CD14-positive monocyte (primary cell): ENCODE measurements at regions of chr2 and their contacts with region 1.

Region 1: GRCh38 chr2:241355983-241356870 is at the start of gene FARP2:
- DNase-seq: peak; percentile 96 to 98 (median 98)
- H3K4me3 ChIP-seq: peak within 1 kb of the TSS; percentile 48 to 82 (median 77)
- H3K4me3 Mint-ChIP-seq: peak within 1 kb of the TSS; percentile 80 to 89
- H3K27ac ChIP-seq: peak within 1 kb of the TSS; percentile 44 to 73
- H3K27ac Mint-ChIP-seq: peak within 1 kb of the TSS; percentile 87 to 95 (median 94)
- H3K4me1 ChIP-seq: peaks cover 29 to 33% of the 10 kb centered on the region in 2 donors
- H3K4me1 Mint-ChIP-seq: peaks cover 35% of the 10 kb centered on the region
- H3K27me3 ChIP-seq: no peaks in the 10 kb centered on the region
- H3K27me3 Mint-ChIP-seq: peaks cover 0 to 4% (median 0%) of the 10 kb centered on the region in 3 donors
- CTCF ChIP-seq: no peak
- polyA plus RNA-seq, gene FARP2: 6.7 to 8.5 (median 7.3) TPM

Region 2: DNA sequence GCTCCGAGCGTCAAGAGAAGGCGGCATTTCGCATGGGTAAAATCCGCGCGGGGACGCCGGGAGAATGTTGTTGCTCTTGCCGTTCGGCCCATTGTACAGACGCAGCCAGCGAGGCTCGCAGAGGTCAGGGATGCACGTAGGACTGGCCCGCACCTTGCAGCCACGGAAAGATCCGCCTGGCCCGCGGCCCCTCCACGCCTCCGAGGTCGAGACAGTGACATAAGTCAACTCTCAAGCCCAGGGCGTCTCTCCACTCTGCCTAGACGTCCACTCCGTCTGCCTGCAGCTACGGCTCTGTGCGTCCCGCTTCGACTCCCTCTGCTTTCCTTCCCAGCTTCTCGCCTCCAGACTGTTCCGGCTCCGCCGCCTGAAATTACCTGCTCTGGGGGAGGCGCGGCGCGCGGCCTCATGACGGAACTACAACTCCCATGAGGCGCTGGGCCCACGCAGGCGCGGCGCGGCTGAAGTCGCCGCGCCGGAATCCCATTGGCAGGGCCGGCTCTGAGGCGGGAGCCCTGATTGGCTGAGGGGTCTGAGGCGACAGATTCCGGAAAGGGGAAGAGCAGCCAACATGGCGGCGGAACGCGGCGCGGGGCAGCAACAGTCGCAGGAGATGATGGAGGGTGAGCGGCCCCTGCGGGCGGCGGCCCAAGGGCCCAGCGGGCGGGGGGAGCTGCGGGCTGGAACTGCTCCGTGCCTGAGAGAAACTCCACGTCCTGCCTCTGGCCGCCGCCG is 206.1 kb before region 1 on chr2 and contains the start of gene PPP1R7:
- intact Hi-C with region 1: loop called (anchors 5 kb)
- DNase-seq: peak; percentile 89 to 92 (median 91)
- H3K4me3 ChIP-seq: peak within 1 kb of the TSS; percentile 56 to 87 (median 83)
- H3K4me3 Mint-ChIP-seq: peak within 1 kb of the TSS; percentile 98 to 99
- H3K27ac ChIP-seq: peak within 1 kb of the TSS in 1 of 2 donors; percentile 74
- H3K27ac Mint-ChIP-seq: peak within 1 kb of the TSS; percentile 73 to 95 (median 85)
- H3K4me1 ChIP-seq: peaks cover 12 to 27% of the 10 kb centered on the region in 2 donors
- H3K4me1 Mint-ChIP-seq: peaks cover 24% of the 10 kb centered on the region
- H3K27me3 ChIP-seq: no peaks in the 10 kb centered on the region
- H3K27me3 Mint-ChIP-seq: peaks cover 0 to 8% (median 2%) of the 10 kb centered on the region in 3 donors
- CTCF ChIP-seq: no peak
- polyA plus RNA-seq, gene PPP1R7: 54.9 to 102 (median 84.4) TPM

Region 3: DNA sequence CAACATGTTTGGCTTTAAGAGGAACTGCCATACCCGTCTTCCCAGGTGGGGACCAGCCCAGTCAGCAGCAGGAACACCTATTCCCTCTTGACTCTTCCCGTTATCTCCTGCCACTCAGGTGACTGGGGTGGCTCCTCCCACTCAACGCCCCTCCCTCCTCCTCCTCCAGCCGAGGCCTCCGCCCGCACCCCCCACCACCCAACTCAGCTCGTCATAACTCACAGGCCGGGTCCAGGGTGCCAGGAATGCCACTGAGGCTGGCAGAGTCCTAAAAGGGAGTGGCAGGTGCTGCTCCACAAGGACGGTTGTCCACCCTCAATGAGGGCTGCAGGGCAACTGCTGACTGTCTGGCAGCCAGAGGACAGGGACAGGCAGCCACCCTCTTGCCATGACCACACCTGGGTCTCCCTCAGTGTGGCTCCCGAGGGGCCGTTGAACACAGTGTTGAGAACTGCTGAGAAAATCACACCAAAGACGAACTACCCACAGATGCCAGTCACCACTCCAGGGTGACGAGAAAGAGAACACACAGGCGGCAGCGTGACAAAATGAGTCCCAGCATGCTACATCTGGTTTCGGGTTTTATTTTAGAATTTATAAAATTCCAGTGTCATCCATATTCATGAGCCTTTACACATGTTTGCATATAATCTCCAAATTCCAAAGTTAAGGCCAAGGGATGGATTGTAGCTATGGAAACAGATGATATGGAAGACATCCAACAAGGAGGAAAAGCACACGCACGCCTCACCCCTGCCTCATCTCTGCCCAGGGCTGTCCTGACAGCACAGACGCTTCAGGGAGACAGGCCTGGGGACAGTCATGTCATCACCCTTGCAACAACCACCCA is 129.3 kb before region 1 on chr2:
- intact Hi-C with region 1: no loop called
- DNase-seq: no peak
- H3K4me3 ChIP-seq: no peak overlapping the region
- H3K4me3 Mint-ChIP-seq: no peak overlapping the region
- H3K27ac ChIP-seq: no peak overlapping the region
- H3K27ac Mint-ChIP-seq: peak overlapping the region in 4 of 7 donors; percentile 30 to 68 (median 32)
- H3K4me1 ChIP-seq: no peaks in the 10 kb centered on the region
- H3K4me1 Mint-ChIP-seq: peaks cover 11% of the 10 kb centered on the region
- H3K27me3 ChIP-seq: no peaks in the 10 kb centered on the region
- H3K27me3 Mint-ChIP-seq: peaks cover 0 to 7% (median 5%) of the 10 kb centered on the region in 3 donors
- CTCF ChIP-seq: no peak

Region 4: DNA sequence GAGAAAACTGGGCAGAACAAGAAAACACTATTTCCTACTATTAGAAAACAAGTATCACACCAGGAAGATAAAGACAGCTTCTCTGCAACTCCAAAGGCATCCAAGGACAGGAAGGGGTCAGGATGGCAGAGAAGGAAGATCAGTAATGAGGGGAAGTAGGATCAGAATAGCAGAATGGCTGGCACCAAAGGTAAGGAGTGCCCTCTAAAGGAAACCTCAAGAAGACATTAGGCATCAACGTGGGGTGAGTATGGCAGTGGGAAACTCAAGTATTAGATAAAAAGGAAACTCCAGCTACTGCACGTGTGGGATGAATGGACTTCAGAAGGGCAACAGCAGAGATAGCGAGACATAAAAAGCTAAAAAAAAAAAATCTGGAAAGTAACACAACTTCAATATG is 66.6 kb before region 1 on chr2:
- intact Hi-C with region 1: no loop called
- DNase-seq: no peak
- H3K4me3 ChIP-seq: no peak overlapping the region
- H3K4me3 Mint-ChIP-seq: no peak overlapping the region
- H3K27ac ChIP-seq: no peak overlapping the region
- H3K27ac Mint-ChIP-seq: peak overlapping the region in 2 of 7 donors; percentile 15 to 51
- H3K4me1 ChIP-seq: no peaks in the 10 kb centered on the region
- H3K4me1 Mint-ChIP-seq: peaks cover 10% of the 10 kb centered on the region
- H3K27me3 ChIP-seq: no peaks in the 10 kb centered on the region
- H3K27me3 Mint-ChIP-seq: peaks cover 0 to 3% (median 0%) of the 10 kb centered on the region in 3 donors
- CTCF ChIP-seq: no peak

Region 5: GRCh38 chr2:241315093-241315878 is 40.9 kb before region 1 on chr2 and contains the start of gene HDLBP:
- intact Hi-C with region 1: loop called (anchors 2 kb)
- DNase-seq: peak; percentile 99 to 100 (median 100)
- H3K4me3 ChIP-seq: peak within 1 kb of the TSS; percentile 88 to 96 (median 88)
- H3K4me3 Mint-ChIP-seq: peak within 1 kb of the TSS; percentile 96 to 99
- H3K27ac ChIP-seq: peak within 1 kb of the TSS; percentile 98 to 99
- H3K27ac Mint-ChIP-seq: peak within 1 kb of the TSS; percentile 100
- H3K4me1 ChIP-seq: peaks cover 37 to 51% of the 10 kb centered on the region in 2 donors
- H3K4me1 Mint-ChIP-seq: peaks cover 72% of the 10 kb centered on the region
- H3K27me3 ChIP-seq: no peaks in the 10 kb centered on the region
- H3K27me3 Mint-ChIP-seq: peaks cover 0 to 5% (median 4%) of the 10 kb centered on the region in 3 donors
- CTCF ChIP-seq: no peak
- polyA plus RNA-seq, gene HDLBP: 50.4 to 73.1 (median 69.9) TPM

Region 6: DNA sequence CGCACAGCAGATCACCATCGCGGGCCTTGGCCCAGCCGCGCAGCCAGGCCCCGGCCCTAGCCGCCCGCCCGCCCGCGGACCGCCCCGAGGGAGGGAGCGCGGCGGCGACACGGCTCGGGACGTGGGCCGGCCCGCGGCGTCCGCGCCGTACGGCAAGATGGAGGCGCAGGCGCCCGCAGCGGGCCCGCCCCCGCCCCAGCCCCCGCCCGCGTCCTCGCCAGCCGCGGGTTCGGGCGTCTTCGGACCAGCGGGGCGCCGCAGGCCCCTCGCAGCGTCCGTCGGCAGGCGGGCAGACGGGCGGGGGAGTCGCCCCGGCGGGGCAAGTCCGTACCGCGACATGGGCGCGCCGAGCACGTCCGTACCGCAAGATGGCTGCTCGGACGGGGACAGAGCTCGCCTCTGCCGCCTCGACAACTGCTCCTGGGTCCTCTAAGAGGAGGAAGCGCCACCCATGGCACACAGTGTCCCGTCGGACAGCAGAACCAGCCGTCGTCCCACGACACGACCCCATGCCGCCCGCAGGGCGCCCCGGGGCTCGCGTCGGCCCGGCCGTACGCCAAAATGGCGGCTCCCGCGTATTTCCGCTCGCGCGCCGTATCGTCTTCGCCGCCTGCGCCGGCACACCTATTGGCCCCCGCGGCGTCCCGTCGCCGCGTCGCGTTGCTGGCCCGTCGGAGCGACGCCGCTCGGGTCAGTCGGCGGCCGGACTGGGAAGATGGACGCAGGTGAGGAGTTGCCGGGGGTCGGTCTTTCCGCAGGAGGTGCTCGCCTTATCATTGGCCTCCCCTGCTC is 281.0 kb after region 1 on chr2 and contains the starts of genes ATG4B and THAP4:
- intact Hi-C with region 1: loop called (anchors 10 kb)
- DNase-seq: peak; percentile 77 to 78 (median 78)
- H3K4me3 ChIP-seq: peak within 1 kb of the TSS; percentile 67 to 96 (median 77)
- H3K4me3 Mint-ChIP-seq: peak within 1 kb of the TSS; percentile 84 to 90
- H3K27ac ChIP-seq: peak within 1 kb of the TSS; percentile 82 to 95
- H3K27ac Mint-ChIP-seq: peak within 1 kb of the TSS; percentile 75 to 97 (median 90)
- H3K4me1 ChIP-seq: peaks cover 23 to 31% of the 10 kb centered on the region in 2 donors
- H3K4me1 Mint-ChIP-seq: peaks cover 51% of the 10 kb centered on the region
- H3K27me3 ChIP-seq: no peaks in the 10 kb centered on the region
- H3K27me3 Mint-ChIP-seq: peaks cover 0 to 2% (median 0%) of the 10 kb centered on the region in 3 donors
- CTCF ChIP-seq: no peak
- polyA plus RNA-seq, gene ATG4B: 54.5 to 202 (median 58.9) TPM
- polyA plus RNA-seq, gene THAP4: 15.1 to 25.9 (median 16.3) TPM

Region 7: GRCh38 chr2:241734467-241735208 is 378.4 kb after region 1 on chr2 and contains the start of gene D2HGDH:
- intact Hi-C with region 1: loop called in 1 of 2 experiments (anchors 10 kb)
- DNase-seq: peak; percentile 77 to 89 (median 84)
- H3K4me3 ChIP-seq: peak within 1 kb of the TSS; percentile 71 to 93 (median 85)
- H3K4me3 Mint-ChIP-seq: peak within 1 kb of the TSS; percentile 88 to 90
- H3K27ac ChIP-seq: peak within 1 kb of the TSS in 1 of 2 donors; percentile 83
- H3K27ac Mint-ChIP-seq: peak within 1 kb of the TSS; percentile 28 to 80 (median 51)
- H3K4me1 ChIP-seq: peaks cover 19 to 34% of the 10 kb centered on the region in 2 donors
- H3K4me1 Mint-ChIP-seq: peaks cover 29% of the 10 kb centered on the region
- H3K27me3 ChIP-seq: no peaks in the 10 kb centered on the region
- H3K27me3 Mint-ChIP-seq: peaks cover 1 to 5% (median 4%) of the 10 kb centered on the region in 3 donors
- CTCF ChIP-seq: no peak
- polyA plus RNA-seq, gene D2HGDH: 1.0 to 57.1 (median 1.1) TPM